HEK293 (cell line): ENCODE measurements at regions of chr20 and their contacts with region 1.

Region 1: DNA sequence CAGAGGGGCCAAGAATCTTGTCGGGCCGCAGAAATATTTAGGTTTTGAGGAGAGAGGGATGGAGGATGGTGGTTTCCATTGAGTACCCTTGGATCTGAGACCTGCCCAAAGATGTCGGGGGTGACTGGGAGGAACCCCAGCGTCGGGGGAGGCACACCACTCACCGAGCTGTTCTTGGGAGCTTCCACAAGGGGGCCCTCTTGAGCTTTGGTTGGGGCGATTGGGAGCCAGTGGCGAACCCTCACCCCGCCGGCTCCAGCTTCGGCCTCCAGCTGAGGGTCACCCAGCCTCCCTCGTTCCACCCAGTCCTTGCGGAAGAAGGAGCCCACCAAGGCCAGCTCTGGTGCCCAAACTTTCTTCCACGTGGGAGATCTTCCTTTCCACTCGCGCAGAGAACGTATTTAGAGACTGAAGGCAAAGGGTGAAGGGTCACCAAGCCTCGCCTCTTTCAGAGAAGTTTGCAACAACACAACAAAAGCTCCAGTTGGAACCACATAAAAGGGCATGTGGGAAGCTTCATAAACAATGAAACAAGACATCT is 33.6 kb downstream of the APCDD1L start:
- H3K4me3 ChIP-seq: no peak overlapping the region
- H3K27ac ChIP-seq: no peak overlapping the region
- H3K4me1 ChIP-seq: no peaks in the 10 kb centered on the region
- CTCF ChIP-seq: no peak

Region 2: GRCh38 chr20:58293453-58293852 is 188.1 kb before region 1 on chr20:
- CTCF ChIA-PET with region 1: no interaction called
- POLR2A ChIA-PET with region 1: no interaction called
- H3K4me3 ChIP-seq: no peak overlapping the region
- H3K27ac ChIP-seq: no peak overlapping the region
- H3K4me1 ChIP-seq: no peaks in the 10 kb centered on the region
- CTCF ChIP-seq: no peak

Region 3: DNA sequence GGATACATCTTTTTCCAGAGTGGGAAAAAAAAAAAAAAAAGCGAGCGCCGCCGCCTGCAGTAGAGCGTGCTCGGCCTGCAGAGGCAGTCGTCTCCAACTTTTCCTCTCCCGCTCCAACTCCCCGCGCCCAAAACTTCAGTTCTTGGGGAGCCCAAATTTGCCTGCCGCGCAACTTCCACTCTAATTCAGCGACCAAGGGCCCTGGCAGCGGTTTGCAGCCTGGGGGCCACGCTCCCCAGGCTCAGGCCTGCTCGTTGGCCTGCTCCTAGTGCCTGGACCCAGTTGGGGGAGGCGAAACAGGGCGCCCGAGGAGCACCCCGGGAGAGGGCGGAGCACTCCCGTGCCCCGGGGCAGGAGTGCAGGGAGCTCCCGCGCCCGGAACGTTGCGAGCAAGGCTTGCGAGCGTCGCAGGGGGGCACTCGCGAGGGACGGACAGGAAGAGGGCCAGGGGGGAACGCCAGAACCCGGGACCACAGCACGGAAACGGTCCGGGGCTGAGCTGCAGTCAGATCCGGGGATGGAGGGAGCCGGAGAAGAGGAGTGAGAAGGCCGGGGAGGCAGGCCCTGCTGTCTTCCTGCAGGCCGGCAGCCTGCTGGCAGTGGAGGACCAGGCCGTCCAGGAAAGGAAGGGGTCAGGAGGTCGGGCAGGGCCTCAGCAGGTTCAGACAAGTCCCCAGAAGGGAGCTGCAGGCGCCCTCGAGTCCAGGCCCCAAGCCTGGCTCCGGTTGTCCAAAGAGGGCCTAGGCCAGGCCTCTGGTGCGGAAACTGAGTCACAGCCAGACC is 169.4 kb after region 1 on chr20 and contains the start of gene STX16:
- CTCF ChIA-PET with region 1: interaction called, 5 read pairs
- POLR2A ChIA-PET with region 1: interaction called, 10 read pairs
- H3K4me3 ChIP-seq: peak within 1 kb of the TSS; percentile 99
- H3K27ac ChIP-seq: peak within 1 kb of the TSS; percentile 65
- H3K4me1 ChIP-seq: peaks cover 6% of the 10 kb centered on the region
- CTCF ChIP-seq: peak; percentile 92

Region 4: DNA sequence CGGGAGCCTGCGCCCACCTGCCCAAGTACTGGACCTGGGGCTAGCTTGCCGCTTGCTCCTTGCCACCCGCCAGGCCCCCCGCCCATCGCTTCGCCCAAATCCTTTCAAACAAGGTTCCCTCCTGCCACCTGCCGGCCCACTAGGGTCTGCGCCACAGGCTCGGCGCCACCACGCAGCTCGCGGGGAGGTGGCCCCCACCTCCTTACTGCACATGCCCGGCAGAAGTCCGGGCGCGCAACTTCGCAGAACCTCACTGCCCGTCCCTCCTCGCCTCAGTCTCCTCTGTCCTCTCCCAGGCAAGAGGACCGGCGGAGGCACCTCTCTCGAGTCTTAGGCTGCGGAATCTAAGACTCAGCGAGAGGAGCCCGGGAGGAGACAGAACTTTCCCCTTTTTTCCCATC is 357.9 kb after region 1 on chr20:
- CTCF ChIA-PET with region 1: interaction called, 23 read pairs
- POLR2A ChIA-PET with region 1: no interaction called
- H3K4me3 ChIP-seq: peak overlapping the region; percentile 10; the same call in 1 of the 2 replicates
- H3K27ac ChIP-seq: no peak overlapping the region
- H3K4me1 ChIP-seq: no peaks in the 10 kb centered on the region
- CTCF ChIP-seq: peak; percentile 87